ENCODE measurements at regions of chr11 and their contacts with region 1.

Region 1: GRCh38 chr11:102306048-102306585 is 11.2 kb upstream of the BIRC3 start:
- DNase-seq: peak; percentile 98
- ATAC-seq: peak; percentile 94
- H3K4me3 ChIP-seq: peak overlapping the region; percentile 55
- H3K27ac ChIP-seq: peak overlapping the region; percentile 87
- H3K4me1 ChIP-seq: peaks cover 37% of the 10 kb centered on the region
- H3K27me3 ChIP-seq: no peaks in the 10 kb centered on the region
- CTCF ChIP-seq: peak; percentile 63

Region 2: DNA sequence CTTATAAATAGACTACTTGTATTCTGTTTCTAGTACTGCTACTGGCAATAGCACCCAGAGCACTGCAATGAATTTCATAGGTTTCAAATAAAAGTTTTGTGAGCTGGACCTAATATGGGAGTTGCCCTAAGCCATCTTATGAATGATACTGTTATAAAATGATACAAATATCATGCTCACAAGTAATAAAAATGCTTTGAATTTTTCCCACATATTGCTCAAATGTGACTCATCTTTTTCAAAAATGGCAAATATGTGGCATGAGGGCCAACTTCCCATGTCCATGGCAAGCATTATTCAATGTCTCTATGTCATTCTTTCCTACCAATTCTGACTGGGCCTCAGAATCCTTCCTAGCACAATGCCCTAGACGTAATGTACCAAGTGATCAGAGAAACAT is 859.9 kb before region 1 on chr11:
- CTCF ChIA-PET with region 1: no interaction called
- POLR2A ChIA-PET with region 1: no interaction called
- intact Hi-C with region 1: loop called (anchors 1 kb)
- DNase-seq: peak; percentile 94
- ATAC-seq: peak; percentile 88
- H3K4me3 ChIP-seq: peak overlapping the region; percentile 0; the same call in 1 of the 2 replicates
- H3K27ac ChIP-seq: peak overlapping the region; percentile 79
- H3K4me1 ChIP-seq: peaks cover 41% of the 10 kb centered on the region
- H3K27me3 ChIP-seq: no peaks in the 10 kb centered on the region
- CTCF ChIP-seq: no peak

Region 3: DNA sequence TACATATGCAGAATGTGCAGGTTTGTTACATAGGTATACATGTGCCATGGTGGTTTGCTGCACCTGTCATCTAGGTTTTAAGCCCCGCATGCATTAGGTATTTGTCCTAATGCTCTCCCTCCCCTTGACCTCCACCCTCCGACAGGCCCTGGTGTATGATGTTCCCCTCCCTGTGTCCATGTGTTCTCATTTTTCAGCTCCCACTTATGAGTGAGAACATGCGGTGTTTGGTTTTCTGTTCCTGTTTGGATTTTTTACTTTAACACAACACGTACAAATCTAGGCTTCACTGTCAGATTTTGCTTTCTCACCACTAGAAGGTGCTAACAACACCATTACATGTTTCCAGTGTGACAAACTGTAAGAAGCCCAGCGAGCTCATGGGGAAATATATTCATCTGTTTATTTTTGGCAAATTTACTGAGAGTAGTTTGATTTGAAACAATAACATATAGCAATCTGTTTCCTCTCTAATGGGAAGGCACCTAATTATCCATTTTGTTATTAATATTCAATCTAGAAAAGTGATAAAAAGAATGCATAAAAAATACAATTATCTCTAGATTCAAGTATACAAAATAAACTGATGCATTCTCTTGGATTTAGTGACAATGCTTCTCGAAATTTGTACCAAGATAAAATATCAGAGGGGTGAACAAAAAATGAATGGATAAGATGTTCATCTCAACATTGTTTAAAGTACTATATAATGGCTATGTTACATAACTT is 12.1 kb before region 1 on chr11:
- CTCF ChIA-PET with region 1: interaction called, 35 read pairs
- POLR2A ChIA-PET with region 1: no interaction called
- intact Hi-C with region 1: loop called (anchors 1 kb)
- DNase-seq: peak; percentile 80
- ATAC-seq: peak; percentile 49
- H3K4me3 ChIP-seq: no peak overlapping the region
- H3K27ac ChIP-seq: no peak overlapping the region
- H3K4me1 ChIP-seq: peaks cover 25% of the 10 kb centered on the region
- H3K27me3 ChIP-seq: no peaks in the 10 kb centered on the region
- CTCF ChIP-seq: peak; percentile 82

Region 4: GRCh38 chr11:102709201-102709945 is 403.3 kb after region 1 on chr11:
- CTCF ChIA-PET with region 1: no interaction called
- POLR2A ChIA-PET with region 1: no interaction called
- intact Hi-C with region 1: no loop called
- DNase-seq: no peak
- ATAC-seq: no peak
- H3K4me3 ChIP-seq: no peak overlapping the region
- H3K27ac ChIP-seq: no peak overlapping the region
- H3K4me1 ChIP-seq: no peaks in the 10 kb centered on the region
- H3K27me3 ChIP-seq: peaks cover 25% of the 10 kb centered on the region
- CTCF ChIP-seq: no peak

Measured in PC-3 (cell line).